ENCODE measurements at regions of chr11 and their contacts with region 1.

Region 1: DNA sequence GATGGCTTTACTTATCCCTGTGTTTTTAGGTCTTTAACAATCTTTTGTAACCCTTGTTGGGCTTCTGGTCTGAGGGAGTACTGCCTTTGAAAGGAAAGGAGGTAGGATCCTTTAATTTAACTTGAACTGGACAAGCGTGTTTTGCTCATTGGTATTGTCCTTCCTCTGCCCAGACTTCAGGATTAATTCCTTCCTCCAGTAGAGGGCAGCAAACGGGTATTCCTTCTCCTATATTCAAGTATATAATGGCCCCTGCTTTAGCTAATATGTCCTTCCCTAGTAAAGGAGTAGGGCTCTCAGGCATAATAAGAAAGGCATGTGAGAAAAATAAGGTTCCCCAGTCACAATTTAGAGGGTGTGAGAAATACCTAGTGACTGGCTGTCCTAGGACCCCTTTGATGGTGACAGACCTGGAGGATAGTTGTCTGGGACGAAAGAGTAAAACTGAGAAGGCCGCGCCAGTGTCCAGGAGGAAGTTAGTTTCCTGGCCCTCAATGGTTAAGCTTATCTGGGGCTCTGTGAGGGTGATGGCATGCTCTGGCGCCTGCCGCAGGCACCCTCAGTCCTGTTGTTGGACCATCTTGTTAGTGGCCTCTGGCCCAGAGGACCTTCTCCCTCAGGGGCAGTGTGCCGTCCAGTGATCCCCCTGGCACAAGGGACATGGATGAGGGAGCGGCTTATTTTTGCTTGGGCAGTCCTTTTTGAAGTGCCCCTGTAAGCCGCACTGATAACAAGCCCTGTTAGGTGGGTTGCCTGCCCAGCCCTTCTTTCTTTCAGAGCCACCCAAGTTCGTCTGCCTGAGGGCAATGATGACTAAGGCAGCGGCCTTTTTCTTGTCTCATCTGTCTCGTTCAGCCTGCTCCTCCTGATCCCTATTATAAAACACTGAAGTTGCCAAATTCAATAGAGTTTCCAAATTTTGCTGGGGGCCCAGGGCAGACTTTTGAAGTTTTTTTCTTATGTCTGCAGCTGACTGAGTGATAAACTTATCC is 51.8 kb downstream of the C11orf71 start:
- DNase-seq: no peak
- ATAC-seq: peak; percentile 59

Region 2: GRCh38 chr11:114439229-114440120 is 91.0 kb after region 1 on chr11 and contains the start of gene REXO2:
- intact Hi-C with region 1: loop called (anchors 2 kb)
- DNase-seq: peak; percentile 96
- ATAC-seq: peak; percentile 99
- total RNA-seq, gene REXO2: 174 TPM

Region 3: DNA sequence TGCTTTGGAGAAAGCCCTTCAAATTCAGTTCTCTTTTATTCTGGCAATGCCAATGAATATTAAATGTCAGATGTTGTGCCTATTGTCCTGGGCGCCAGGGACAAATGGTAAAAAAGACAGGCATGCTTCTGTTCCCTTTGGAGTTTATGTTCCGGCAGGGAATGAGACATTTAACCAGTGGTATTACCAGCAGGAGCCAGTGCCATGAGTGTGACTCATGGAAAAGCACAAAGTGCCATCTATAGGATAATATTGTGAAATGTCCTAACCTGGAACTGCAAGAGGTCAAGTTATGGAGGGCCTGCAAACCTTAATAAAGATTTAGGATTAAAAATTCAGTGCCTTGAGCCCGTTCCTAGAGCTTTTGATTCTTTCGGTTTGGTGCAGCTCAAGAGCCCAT is 130.3 kb after region 1 on chr11:
- intact Hi-C with region 1: loop called (anchors 5 kb)
- DNase-seq: no peak
- ATAC-seq: no peak

Region 4: GRCh38 chr11:114664641-114665040 is 316.1 kb after region 1 on chr11:
- intact Hi-C with region 1: no loop called
- DNase-seq: no peak
- ATAC-seq: no peak

Region 5: GRCh38 chr11:115170133-115170815 is 821.8 kb after region 1 on chr11:
- intact Hi-C with region 1: no loop called
- DNase-seq: no peak
- ATAC-seq: no peak

Measured in Right ventricle myocardium inferior (tissue), 1 donor.